ENCODE measurements at regions of chr1 and their contacts with region 1.

Region 1: DNA sequence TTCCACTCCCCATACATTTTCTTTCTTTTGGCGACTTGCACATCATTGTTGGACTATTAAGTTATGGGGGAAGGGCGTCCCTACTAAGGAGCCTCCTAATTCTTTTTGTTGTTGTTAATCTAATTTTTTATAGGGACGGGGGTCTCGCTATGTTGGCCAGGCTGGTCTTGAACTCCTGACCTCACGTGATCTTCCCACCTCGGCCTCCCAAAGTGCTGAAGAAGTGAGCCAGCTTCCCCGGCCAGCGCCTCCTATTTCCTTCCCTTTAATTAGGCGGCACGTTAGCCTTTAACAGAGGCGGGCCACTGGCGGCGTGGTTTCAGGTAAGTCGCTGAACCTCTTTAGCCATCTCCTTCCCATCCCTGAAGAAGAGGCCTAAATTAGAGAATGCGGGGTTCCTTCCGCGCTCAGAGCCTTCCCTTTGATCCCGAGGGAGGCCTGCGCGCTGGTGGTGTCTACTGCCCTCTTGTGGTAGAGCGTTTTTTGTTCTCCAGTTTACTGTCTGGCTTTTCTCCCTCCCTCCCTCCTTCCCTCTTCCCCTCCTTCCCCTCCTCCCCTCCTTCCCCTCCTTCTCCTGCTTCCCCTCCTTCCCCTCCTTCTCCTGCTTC is 38.1 kb downstream of the TNFRSF9 start:
- DNase-seq: peak; percentile 42
- ATAC-seq: peak; percentile 82
- H3K4me3 Mint-ChIP-seq: peak overlapping the region; percentile 56
- H3K27ac Mint-ChIP-seq: no peak overlapping the region
- H3K4me1 Mint-ChIP-seq: peaks cover 4% of the 10 kb centered on the region
- H3K27me3 Mint-ChIP-seq: no peaks in the 10 kb centered on the region
- CTCF ChIP-seq: peak; percentile 54

Region 2: GRCh38 chr1:7808253-7808844 is 94.2 kb before region 1 on chr1:
- CTCF ChIA-PET with region 1: interaction called, 9 read pairs
- POLR2A ChIA-PET with region 1: no interaction called
- intact Hi-C with region 1: loop called (anchors 1 kb)
- DNase-seq: no peak
- ATAC-seq: no peak
- H3K4me3 Mint-ChIP-seq: no peak overlapping the region
- H3K27ac Mint-ChIP-seq: no peak overlapping the region
- H3K4me1 Mint-ChIP-seq: no peaks in the 10 kb centered on the region
- H3K27me3 Mint-ChIP-seq: no peaks in the 10 kb centered on the region
- CTCF ChIP-seq: no peak

Region 3: GRCh38 chr1:7983086-7983778 is 80.7 kb after region 1 on chr1:
- CTCF ChIA-PET with region 1: no interaction called
- POLR2A ChIA-PET with region 1: no interaction called
- intact Hi-C with region 1: no loop called
- DNase-seq: no peak
- ATAC-seq: no peak
- H3K4me3 Mint-ChIP-seq: no peak overlapping the region
- H3K27ac Mint-ChIP-seq: no peak overlapping the region
- H3K4me1 Mint-ChIP-seq: peaks cover 6% of the 10 kb centered on the region
- H3K27me3 Mint-ChIP-seq: no peaks in the 10 kb centered on the region
- CTCF ChIP-seq: no peak